Cardiac septum (tissue), 1 donor: ENCODE measurements at regions of chr5 and their contacts with region 1.

Region 1: DNA sequence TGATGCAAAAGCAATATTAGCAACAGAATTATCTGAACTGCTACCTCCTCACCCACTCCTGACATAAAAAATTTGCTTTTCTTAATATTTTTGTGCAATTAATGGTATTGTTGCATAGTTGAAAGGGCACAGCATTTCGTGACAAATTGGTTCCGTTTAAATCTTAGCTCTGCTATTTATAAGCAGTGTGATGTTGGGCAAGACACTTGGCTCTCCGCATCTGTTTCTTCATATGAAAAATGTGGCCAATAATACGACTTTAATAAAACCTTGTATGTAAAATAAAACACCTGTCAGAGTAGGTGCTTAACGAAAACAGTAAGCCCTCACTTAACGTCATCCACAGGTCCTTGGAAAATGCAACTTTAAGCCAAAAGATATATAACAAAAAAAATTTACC is 4.2 kb downstream of the TMEM167A start:
- DNase-seq: no peak

Region 2: GRCh38 chr5:82785882-82786509 is 287.0 kb before region 1 on chr5:
- intact Hi-C with region 1: no loop called
- DNase-seq: no peak

Region 3: GRCh38 chr5:83035373-83036101 is 37.4 kb before region 1 on chr5:
- intact Hi-C with region 1: loop called (anchors 5 kb)
- DNase-seq: no peak

Region 4: GRCh38 chr5:83281658-83282057 is 208.7 kb after region 1 on chr5:
- intact Hi-C with region 1: no loop called
- DNase-seq: no peak